Heart left ventricle (tissue), 16 donors: ENCODE measurements at regions of chr2 and their contacts with region 1.

Region 1: GRCh38 chr2:176454893-176455811 is 185.9 kb downstream of the MTX2 start:
- DNase-seq: peak; percentile 71 to 85 (median 78)
- ATAC-seq: peak; percentile 42 to 55 (median 46)
- H3K4me3 ChIP-seq: no peak overlapping the region
- H3K27ac ChIP-seq: peak overlapping the region in 11 of 12 donors; percentile 11 to 61 (median 27)
- H3K4me1 ChIP-seq: peaks cover 0 to 20% (median 10%) of the 10 kb centered on the region in 12 donors
- H3K27me3 ChIP-seq: peaks cover 0 to 25% (median 0%) of the 10 kb centered on the region in 9 donors
- CTCF ChIP-seq: peak; percentile 89 to 97 (median 94)
- POLR2A ChIP-seq: no peak

Region 2: DNA sequence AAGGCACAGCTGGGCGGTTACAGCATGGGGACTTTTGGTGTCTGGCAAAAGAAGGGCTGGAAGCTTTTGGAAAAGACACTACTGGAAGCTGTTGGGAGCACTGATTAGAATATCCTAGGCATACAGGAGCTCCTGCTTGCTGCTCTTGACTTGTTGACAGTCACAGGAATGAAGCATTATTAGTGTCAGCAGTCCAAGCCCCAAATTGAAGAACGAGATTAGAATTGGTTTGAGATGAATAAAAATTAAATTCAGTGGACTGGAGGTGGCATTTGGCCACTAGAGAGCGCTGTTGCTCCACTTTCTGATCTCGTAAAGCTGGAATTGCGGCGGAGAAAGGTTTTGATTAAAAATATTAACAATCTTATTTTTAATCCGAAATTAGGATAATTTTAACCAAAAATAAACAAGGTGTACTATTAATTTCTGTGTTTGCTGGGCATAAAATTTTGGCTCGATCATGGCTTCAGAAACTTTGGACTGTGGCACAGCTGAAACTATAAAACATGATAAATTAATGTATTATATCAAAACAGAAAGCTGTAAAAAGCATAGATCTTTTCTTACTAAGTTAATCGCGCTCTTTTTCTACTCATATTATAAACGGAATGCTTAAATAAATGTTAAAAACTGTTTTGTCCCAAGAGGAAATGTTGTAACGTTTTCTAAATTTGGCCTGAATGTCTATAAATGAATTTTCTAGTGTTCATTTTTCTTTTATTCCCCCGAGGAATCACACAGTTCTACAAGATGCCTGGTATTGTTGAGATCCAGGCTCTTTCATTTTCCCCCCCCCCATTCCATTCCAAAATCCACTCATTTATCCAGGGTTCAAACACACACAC is 328.0 kb before region 1 on chr2:
- intact Hi-C with region 1: loop called in 1 of 10 experiments (anchors 5 kb)
- DNase-seq: peak in 3 of 5 donors; percentile 60 to 71 (median 63)
- ATAC-seq: no peak
- H3K4me3 ChIP-seq: no peak overlapping the region
- H3K27ac ChIP-seq: no peak overlapping the region
- H3K4me1 ChIP-seq: peaks cover 4 to 41% (median 22%) of the 10 kb centered on the region in 12 donors
- H3K27me3 ChIP-seq: peaks cover 79 to 100% (median 94%) of the 10 kb centered on the region in 9 donors
- CTCF ChIP-seq: peak; percentile 82 to 97 (median 93)
- POLR2A ChIP-seq: no peak

Region 3: DNA sequence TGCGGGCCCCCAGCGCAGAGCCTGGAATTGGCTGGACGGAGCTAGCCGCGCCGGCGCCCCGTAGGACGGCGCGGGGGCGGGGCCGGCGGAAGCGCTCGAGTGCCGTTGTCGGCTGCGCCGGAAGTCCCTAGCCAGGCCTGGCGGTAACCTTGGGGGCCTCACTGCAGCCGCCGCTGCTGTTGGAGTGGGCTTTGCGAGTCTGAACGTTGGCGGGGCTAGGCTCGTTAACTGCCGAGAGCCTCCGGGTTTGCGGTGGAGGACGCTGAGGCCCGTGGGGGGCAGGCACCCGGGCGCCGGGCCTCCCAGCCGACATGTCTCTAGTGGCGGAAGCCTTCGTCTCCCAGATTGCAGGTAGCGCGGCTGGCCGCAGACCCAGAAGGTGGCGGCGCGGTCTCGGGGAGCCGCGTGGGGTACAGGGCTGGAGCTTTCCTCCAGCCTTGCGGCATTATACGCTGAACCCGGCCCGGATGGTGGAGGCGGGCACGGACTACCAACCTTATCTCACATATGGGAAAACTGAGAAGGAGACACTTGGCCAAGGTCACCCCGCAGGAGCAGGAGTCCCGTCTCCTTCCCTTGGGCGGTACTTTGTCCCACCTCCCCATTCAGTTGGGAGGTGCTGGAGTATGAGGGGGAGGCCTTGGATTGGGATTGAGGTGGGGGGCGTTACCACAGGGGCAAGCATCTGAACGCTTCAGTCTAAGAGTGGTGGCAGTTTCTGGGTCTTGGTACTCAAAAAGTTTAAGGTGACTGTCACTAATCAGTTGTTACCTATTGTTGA is 185.6 kb before region 1 on chr2 and contains the start of gene MTX2:
- intact Hi-C with region 1: loop called in 2 of 10 experiments (anchors 5 kb)
- DNase-seq: peak; percentile 78 to 88 (median 82)
- ATAC-seq: peak; percentile 93 to 100 (median 99)
- H3K4me3 ChIP-seq: peak within 1 kb of the TSS; percentile 59 to 98 (median 94)
- H3K27ac ChIP-seq: peak within 1 kb of the TSS; percentile 79 to 96 (median 92)
- H3K4me1 ChIP-seq: peaks cover 0 to 38% (median 13%) of the 10 kb centered on the region in 12 donors
- H3K27me3 ChIP-seq: no peaks in the 10 kb centered on the region
- CTCF ChIP-seq: peak in 4 of 12 donors; percentile 21 to 36 (median 28)
- POLR2A ChIP-seq: peak in 1 of 2 donors; percentile 67
- total RNA-seq, gene MTX2: 37.6 to 57.8 (median 43.2) TPM

Region 4: DNA sequence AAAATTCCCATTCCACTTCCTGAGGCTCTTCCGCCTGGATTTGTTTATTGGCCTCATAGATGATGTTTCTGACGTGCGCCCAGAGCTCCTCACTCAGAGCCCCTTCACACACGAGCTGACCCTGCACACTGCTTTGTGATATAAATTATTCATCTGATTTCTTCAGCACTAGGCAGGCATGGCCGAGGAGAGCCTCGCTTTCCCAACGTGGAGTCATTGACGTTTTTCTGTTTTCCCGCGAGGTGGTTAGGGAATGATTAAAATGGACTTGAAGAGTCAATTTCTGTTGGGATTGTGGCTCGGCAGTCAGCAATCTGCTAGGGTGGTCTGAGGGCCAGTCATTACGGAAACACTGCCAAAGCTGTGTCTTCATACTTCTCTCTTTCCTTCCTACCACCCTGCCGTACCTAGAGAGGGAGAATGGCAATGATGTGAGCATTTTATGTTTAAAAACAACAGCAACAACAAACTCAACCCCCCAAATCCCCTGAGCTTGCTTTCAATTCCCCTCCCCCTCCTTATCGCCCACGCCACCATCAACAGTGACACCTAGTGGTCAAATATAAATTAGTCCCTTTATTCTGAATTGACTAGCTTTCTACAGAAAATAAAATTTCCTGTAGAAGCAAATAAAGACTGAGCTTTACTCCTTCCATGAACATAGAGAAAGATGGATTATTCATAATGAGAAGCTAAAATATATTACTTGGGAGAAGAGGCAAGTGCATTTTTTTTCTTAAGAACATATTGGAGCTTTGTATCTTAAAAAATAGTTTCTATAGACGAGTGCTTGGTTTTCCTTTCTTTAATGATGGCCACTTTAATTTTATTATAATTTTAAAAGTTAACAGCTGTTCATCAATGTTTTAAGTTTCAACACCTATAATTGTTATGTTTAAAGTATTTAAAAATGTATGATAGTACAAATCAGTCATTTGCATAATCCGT is 99.2 kb after region 1 on chr2:
- intact Hi-C with region 1: loop called (anchors 1 to 5 kb)
- DNase-seq: peak in 3 of 5 donors; percentile 24 to 32 (median 26)
- ATAC-seq: peak; percentile 25 to 75 (median 66)
- H3K4me3 ChIP-seq: peak overlapping the region in 11 of 12 donors; percentile 28 to 65 (median 52)
- H3K27ac ChIP-seq: peak overlapping the region; percentile 2 to 79 (median 68)
- H3K4me1 ChIP-seq: peaks cover 0 to 22% (median 5%) of the 10 kb centered on the region in 12 donors
- H3K27me3 ChIP-seq: peaks cover 0 to 37% (median 13%) of the 10 kb centered on the region in 9 donors
- CTCF ChIP-seq: peak; percentile 67 to 87 (median 78)
- POLR2A ChIP-seq: no peak

Region 5: DNA sequence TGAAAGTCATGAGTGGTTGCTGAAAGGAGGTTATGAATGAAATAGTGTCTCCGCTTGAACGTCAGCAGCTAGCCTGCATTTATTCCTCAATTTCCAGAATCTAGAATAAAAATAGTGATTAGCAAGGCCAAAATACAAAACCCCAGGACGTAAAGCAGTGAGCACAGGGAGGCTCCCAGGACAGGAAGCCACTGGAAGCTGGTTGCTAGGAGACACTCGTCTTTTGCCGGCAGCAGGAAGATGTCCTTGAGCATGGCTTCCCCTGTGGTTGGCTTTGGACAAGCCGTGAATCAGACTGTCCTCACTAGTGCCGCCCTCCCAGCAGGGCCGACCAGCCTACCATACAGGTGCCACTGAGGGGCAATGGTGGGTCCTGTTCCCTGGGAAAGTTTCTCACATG is 188.5 kb after region 1 on chr2:
- intact Hi-C with region 1: loop called in 8 of 10 experiments (anchors 5 to 10 kb)
- DNase-seq: no peak
- ATAC-seq: no peak
- H3K4me3 ChIP-seq: no peak overlapping the region
- H3K27ac ChIP-seq: no peak overlapping the region
- H3K4me1 ChIP-seq: no peaks in the 10 kb centered on the region
- H3K27me3 ChIP-seq: peaks cover 4 to 95% (median 47%) of the 10 kb centered on the region in 9 donors
- CTCF ChIP-seq: no peak
- POLR2A ChIP-seq: no peak

Region 6: GRCh38 chr2:177148477-177149154 is 693.5 kb after region 1 on chr2:
- intact Hi-C with region 1: loop called in 1 of 10 experiments (anchors 10 kb)
- DNase-seq: peak; percentile 66 to 82 (median 72)
- ATAC-seq: peak; percentile 64 to 95 (median 82)
- H3K4me3 ChIP-seq: peak overlapping the region in 11 of 12 donors; percentile 8 to 54 (median 45)
- H3K27ac ChIP-seq: no peak overlapping the region
- H3K4me1 ChIP-seq: peaks cover 0 to 14% (median 4%) of the 10 kb centered on the region in 12 donors
- H3K27me3 ChIP-seq: peaks cover 10 to 69% (median 47%) of the 10 kb centered on the region in 9 donors
- CTCF ChIP-seq: peak; percentile 58 to 86 (median 78)
- POLR2A ChIP-seq: no peak